AG04450 (cell line): ENCODE measurements at regions of chr1 and their contacts with region 1.

Region 1: GRCh38 chr1:21368515-21369289 is 71.2 kb upstream of the NBPF3 start:
- DNase-seq: peak; percentile 59
- H3K4me3 ChIP-seq: no peak overlapping the region
- H3K27ac ChIP-seq: no peak overlapping the region
- H3K27me3 ChIP-seq: no peaks in the 10 kb centered on the region
- CTCF ChIP-seq: peak; percentile 100

Region 2: DNA sequence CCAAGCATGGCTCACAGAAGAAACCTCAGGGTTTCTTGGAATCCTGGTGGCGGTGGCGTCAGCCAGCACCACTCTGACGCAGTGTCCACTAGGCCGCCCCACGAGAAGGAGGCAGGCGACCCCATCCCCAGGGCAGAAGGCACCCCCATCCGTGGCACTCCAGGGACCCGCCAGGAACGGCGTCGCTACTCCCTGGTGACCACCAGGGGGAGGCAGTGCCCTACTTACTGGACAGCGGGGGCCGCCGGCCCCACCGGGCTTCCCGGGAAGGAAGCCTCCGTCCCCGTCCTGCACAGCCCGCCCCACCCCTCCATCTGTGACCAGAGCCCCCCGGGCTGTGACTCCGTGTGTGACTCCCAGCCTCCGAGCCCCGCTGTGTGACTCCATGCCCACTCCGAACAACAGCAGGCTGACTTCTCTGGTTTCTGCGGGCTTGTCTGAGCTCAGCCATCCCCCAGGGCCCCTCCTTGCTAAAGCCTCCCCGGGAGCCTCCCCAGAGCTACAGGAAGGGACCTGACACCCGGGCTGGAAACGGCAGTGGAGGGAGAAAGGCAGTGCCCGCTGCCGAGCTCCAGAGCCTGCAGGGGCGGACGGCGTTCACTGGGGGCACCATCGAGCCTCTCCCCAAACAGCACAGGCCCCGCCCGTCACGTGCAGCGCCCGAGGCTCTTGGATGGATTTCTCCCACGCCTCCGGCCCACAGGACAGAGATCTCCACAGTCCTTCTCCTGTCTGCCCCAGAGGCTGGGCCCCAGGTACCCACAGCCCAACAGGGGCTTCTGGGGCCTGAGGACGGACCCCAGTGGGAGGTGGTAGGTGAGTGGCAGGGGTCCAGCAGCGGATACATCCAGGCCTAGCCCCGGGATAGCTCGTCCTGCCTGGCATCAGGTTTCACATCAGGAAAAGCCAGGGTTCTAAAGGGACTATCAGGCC is 672.0 kb before region 1 on chr1:
- CTCF ChIA-PET with region 1: interaction called, 20 read pairs
- POLR2A ChIA-PET with region 1: no interaction called
- DNase-seq: peak; percentile 90
- H3K4me3 ChIP-seq: peak overlapping the region; percentile 65
- H3K27ac ChIP-seq: peak overlapping the region; percentile 99
- H3K27me3 ChIP-seq: no peaks in the 10 kb centered on the region
- CTCF ChIP-seq: peak; percentile 81

Region 3: DNA sequence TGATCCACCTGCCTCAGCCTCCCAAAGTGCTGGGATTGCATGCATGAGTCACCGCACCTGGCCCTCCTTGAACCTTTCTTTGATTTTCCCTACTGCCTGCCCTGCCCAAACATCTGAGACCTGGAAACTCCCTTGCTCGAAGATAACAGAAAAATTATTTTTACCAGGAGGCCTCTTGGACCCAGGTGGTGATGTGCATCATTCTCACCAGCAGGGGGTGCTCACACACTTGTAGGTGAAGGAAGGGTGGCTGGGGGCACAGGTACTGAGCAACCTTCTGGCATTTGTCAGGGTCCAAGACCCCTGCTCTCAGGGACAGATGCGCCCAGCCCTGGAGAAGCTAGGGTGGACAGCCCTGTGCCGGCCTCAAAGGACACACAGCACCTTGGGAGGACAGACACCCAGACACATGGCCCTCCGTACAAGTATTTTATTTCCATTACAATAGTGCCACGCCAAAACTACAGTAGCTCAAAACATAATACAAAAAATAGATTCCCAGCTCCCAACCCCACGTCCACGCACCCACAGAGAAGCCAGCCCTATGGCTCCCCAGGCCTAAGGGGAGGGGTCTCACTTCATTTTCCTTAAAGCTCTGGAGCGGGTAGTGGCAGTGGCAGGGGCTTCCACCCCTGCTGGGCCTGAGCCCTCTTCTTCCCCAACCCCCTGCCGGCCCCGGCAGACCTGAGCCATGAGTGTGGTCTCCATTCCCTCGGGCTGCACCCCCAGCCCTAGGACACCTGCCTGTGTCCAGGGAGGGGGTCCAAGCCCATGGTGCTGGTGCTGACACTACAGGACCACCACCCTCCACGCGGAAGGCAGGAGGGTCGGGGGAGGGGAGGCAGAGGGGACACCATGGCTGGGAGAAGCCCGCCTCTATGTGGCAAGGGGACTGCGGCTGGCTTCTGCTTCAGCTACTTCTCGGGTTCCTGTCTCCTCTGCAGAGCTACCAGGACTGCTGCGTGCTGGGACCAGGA is 151.6 kb before region 1 on chr1:
- CTCF ChIA-PET with region 1: interaction called, 23 read pairs
- POLR2A ChIA-PET with region 1: no interaction called
- DNase-seq: no peak
- H3K4me3 ChIP-seq: no peak overlapping the region
- H3K27ac ChIP-seq: peak overlapping the region; percentile 21
- H3K27me3 ChIP-seq: no peaks in the 10 kb centered on the region
- CTCF ChIP-seq: peak; percentile 73

Region 4: GRCh38 chr1:21244986-21245687 is 123.6 kb before region 1 on chr1:
- CTCF ChIA-PET with region 1: interaction called, 17 read pairs
- POLR2A ChIA-PET with region 1: no interaction called
- DNase-seq: no peak
- H3K4me3 ChIP-seq: no peak overlapping the region
- H3K27ac ChIP-seq: no peak overlapping the region
- H3K27me3 ChIP-seq: no peaks in the 10 kb centered on the region
- CTCF ChIP-seq: peak; percentile 54

Region 5: DNA sequence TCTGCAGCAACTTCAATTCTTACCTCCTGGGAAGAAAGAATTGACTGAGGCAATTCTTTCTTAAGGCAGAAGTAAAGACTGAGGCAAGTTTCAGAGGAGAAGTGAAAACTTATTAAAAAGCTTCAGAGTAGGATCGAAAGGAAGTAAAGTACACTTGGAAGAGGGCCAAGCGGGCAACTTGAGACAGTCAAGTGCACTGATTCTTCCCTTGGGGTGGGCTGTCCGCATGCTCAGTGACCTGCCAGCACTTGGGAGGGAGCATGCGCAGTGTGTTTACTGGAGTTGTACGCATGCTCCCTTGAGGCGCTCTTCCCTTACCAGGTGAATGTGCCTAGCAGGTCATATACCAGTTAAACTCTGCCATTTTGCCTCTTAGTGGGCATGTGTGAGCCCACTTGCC is 15.9 kb after region 1 on chr1:
- CTCF ChIA-PET with region 1: interaction called, 26 read pairs
- POLR2A ChIA-PET with region 1: no interaction called
- DNase-seq: no peak
- H3K4me3 ChIP-seq: no peak overlapping the region
- H3K27ac ChIP-seq: no peak overlapping the region
- H3K27me3 ChIP-seq: peaks cover 17% of the 10 kb centered on the region
- CTCF ChIP-seq: no peak

Region 6: GRCh38 chr1:21537932-21538630 is 169.4 kb after region 1 on chr1:
- CTCF ChIA-PET with region 1: interaction called, 16 read pairs
- POLR2A ChIA-PET with region 1: no interaction called
- DNase-seq: no peak
- H3K4me3 ChIP-seq: no peak overlapping the region
- H3K27ac ChIP-seq: no peak overlapping the region
- H3K27me3 ChIP-seq: peaks cover 32% of the 10 kb centered on the region
- CTCF ChIP-seq: no peak

Region 7: GRCh38 chr1:21647431-21648351 is 279.0 kb after region 1 on chr1:
- CTCF ChIA-PET with region 1: no interaction called
- POLR2A ChIA-PET with region 1: no interaction called
- DNase-seq: peak; percentile 30
- H3K4me3 ChIP-seq: no peak overlapping the region
- H3K27ac ChIP-seq: no peak overlapping the region
- H3K27me3 ChIP-seq: peaks cover 37% of the 10 kb centered on the region
- CTCF ChIP-seq: no peak

Region 8: GRCh38 chr1:21659099-21659923 is 290.6 kb after region 1 on chr1:
- CTCF ChIA-PET with region 1: interaction called, 21 read pairs
- POLR2A ChIA-PET with region 1: no interaction called
- DNase-seq: no peak
- H3K4me3 ChIP-seq: peak overlapping the region; percentile 20; the same call in 1 of the 2 replicates
- H3K27ac ChIP-seq: no peak overlapping the region
- H3K27me3 ChIP-seq: peaks cover 34% of the 10 kb centered on the region
- CTCF ChIP-seq: peak; percentile 84